ENCODE measurements at regions of chr12 and their contacts with region 1.

Region 1: DNA sequence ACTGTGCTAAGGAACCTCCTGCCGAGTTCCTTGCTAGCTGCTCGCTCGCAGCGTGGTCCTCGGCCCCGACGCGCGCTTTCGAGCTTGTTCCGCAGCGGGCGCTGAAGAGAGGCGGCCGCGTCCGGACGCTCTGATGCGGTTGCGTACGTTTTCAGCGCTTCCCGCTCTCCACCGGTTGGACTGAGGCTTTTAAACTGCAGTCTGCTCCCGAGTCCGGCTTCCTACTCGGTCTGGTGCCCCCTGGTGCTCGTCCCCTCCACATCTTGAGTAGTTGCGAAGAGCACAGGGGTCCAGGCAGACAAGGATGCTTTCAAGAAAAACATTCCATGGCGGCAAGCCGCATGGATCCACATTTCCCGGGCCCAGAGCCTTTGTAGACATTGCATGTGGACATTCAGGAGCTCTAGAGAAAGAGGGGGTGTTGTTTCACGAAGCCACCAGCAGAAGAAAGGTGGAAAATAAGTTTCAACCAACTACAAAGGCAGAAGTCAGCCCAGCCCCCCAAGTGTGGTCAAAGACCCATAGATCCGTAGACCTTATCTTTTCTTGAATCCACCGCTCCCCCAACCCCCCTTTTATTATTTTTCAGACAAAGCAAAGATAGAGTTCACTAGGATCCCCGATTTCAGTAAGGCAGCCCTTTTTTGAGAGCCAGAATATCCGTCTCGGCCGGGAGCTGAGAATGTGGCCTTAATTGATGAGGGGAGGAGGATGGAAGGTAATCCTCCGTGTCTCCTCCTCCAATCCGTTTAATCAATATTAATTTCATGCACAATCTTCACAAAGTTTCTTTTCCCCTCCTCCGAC is 984 bp upstream of the WNK1 start:
- DNase-seq: peak; percentile 93 to 96 (median 95)
- ATAC-seq: peak; percentile 67 to 79 (median 70)
- H3K4me3 ChIP-seq: peak overlapping the region; percentile 15 to 97 (median 84)
- H3K27ac ChIP-seq: peak overlapping the region; percentile 39 to 99 (median 98)
- H3K4me1 ChIP-seq: peaks cover 0 to 48% (median 23%) of the 10 kb centered on the region in 12 donors
- H3K27me3 ChIP-seq: no peaks in the 10 kb centered on the region
- CTCF ChIP-seq: peak; percentile 62 to 92 (median 78)
- POLR2A ChIP-seq: peak in 1 of 2 donors; percentile 69

Region 2: GRCh38 chr12:575948-576612 is 175.3 kb before region 1 on chr12:
- intact Hi-C with region 1: loop called in 9 of 10 experiments (anchors 1 to 5 kb)
- DNase-seq: peak; percentile 77 to 92 (median 82)
- ATAC-seq: peak; percentile 17 to 68 (median 52)
- H3K4me3 ChIP-seq: peak overlapping the region in 6 of 12 donors; percentile 12 to 34 (median 20)
- H3K27ac ChIP-seq: peak overlapping the region; percentile 11 to 98 (median 66)
- H3K4me1 ChIP-seq: peaks cover 15 to 71% (median 48%) of the 10 kb centered on the region in 12 donors
- H3K27me3 ChIP-seq: no peaks in the 10 kb centered on the region
- CTCF ChIP-seq: peak; percentile 98 to 100 (median 100)
- POLR2A ChIP-seq: no peak

Region 3: GRCh38 chr12:662566-663292 is 88.7 kb before region 1 on chr12:
- intact Hi-C with region 1: loop called in 2 of 10 experiments (anchors 5 kb)
- DNase-seq: no peak
- ATAC-seq: peak; percentile 52 to 70 (median 64)
- H3K4me3 ChIP-seq: peak overlapping the region in 10 of 12 donors; percentile 22 to 50 (median 40)
- H3K27ac ChIP-seq: peak overlapping the region; percentile 32 to 85 (median 61)
- H3K4me1 ChIP-seq: peaks cover 0 to 42% (median 26%) of the 10 kb centered on the region in 12 donors
- H3K27me3 ChIP-seq: no peaks in the 10 kb centered on the region
- CTCF ChIP-seq: no peak
- POLR2A ChIP-seq: no peak

Region 4: DNA sequence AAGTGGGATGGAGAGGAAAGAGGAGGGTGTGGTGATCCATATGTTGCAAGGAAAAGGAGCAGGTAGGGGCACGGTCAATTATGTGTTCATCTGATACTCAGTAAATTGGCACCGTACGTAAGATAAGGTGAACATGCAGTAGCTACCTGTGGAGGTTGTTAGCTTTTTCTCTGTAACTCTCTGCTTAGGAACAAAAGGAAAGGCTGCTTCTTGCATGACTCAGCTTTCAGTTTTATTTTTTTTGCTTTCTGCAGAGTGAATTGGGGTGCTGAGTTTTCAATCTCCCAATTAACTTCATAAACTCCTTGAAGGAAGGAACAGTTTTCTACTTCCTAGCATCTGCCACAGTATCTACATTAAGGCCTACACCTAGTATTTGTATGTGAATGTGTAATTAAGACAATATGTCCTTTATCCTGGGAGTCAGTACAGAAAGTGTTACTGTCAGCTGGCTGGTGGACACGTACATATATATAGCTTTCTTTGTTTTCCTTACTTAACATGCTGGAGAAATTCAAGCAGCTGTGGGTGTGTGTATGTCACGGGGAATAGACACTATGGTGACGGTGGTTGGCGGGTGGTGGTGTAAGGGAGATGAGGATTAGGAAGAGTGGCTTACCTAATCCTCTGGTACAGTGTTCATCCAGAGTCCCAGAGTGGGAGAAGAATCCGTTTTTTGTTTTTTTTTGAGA is 39.1 kb before region 1 on chr12:
- intact Hi-C with region 1: loop called in 1 of 10 experiments (anchors 5 kb)
- DNase-seq: no peak
- ATAC-seq: no peak
- H3K4me3 ChIP-seq: no peak overlapping the region
- H3K27ac ChIP-seq: peak overlapping the region in 9 of 12 donors; percentile 10 to 89 (median 68)
- H3K4me1 ChIP-seq: peaks cover 0 to 25% (median 5%) of the 10 kb centered on the region in 12 donors
- H3K27me3 ChIP-seq: no peaks in the 10 kb centered on the region
- CTCF ChIP-seq: no peak
- POLR2A ChIP-seq: no peak

Region 5: DNA sequence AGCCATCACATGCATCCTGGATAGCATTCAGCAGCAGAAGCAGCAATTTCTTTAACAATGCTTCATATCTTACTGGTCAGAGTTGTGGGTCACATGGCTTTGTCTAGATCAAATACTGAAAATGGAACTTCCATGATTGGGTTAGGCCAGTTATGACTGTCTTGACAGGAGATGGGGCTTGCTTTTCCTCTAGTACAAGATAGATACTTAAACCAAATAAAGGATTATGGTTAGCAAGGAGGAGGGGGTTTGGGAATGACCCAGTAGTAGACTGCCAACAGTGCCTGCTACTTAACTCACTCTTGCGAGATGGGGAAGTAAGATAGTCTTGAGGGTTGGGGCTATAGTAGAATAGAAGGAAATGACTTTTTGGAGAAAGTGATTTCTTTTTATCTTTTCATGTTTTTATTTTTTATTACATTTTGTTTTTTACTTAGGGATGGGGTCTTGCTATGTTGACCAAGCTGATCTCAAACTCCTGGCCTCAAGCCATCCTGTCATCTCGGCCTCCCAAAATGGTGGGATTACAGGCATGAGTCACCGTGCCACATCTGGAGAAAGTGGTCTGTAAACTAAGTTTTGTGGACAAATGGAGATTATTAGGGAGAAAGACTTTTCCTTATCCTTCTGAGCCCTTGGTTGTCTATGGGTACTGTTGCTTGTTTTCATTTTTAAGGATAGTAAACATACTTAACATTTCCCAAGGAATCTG is 38.6 kb after region 1 on chr12:
- intact Hi-C with region 1: no loop called
- DNase-seq: no peak
- ATAC-seq: peak; percentile 13 to 42 (median 28)
- H3K4me3 ChIP-seq: no peak overlapping the region
- H3K27ac ChIP-seq: peak overlapping the region in 1 of 12 donors; percentile 7
- H3K4me1 ChIP-seq: peaks cover 9 to 93% (median 50%) of the 10 kb centered on the region in 12 donors
- H3K27me3 ChIP-seq: no peaks in the 10 kb centered on the region
- CTCF ChIP-seq: no peak
- POLR2A ChIP-seq: no peak

Region 6: DNA sequence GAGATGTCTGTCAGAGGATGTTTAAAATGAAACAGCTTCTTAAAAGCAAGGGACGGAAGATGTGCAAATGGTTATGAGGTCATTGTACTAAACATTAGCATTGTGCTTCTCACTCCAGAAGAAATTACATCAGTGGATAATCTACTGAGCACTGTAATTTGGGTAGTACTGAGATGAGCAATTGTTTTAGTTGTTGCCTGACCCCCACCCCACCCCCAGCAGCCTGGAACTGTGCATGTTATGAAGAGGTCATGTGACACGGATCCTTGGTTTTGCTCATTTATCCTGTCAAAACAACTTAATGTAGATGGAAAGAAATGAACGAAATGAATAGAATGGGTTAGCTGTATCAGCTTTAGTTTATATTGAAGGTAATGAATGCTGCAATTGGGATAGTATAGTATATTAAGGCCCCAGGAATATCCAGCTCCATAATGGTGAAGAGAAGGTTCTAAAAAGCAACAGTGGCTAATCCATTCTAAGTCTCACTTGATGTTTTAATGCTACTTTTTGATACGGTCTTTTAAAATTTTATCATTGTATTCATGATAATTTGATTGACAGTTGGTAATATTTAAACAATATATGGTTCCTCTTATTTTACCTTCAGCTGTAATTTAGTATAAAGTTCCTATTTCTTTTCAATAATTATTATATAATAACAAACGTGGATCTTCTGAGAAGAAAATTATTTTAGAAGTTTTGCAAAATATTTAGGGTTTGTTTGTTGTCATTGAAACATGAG is 59.4 kb after region 1 on chr12:
- intact Hi-C with region 1: loop called in 8 of 10 experiments (anchors 2 to 5 kb)
- DNase-seq: no peak
- ATAC-seq: peak in 2 of 4 donors; percentile 11 to 21
- H3K4me3 ChIP-seq: no peak overlapping the region
- H3K27ac ChIP-seq: peak overlapping the region in 1 of 12 donors; percentile 13
- H3K4me1 ChIP-seq: peaks cover 9 to 71% (median 44%) of the 10 kb centered on the region in 12 donors
- H3K27me3 ChIP-seq: no peaks in the 10 kb centered on the region
- CTCF ChIP-seq: no peak
- POLR2A ChIP-seq: no peak